ENCODE measurements at regions of chr1 and their contacts with region 1.

Region 1: GRCh38 chr1:156728597-156729462 is at the start of gene ISG20L2:
- DNase-seq: peak; percentile 93 to 94
- H3K4me3 ChIP-seq: peak within 1 kb of the TSS; percentile 90
- H3K27ac ChIP-seq: peak within 1 kb of the TSS; percentile 46
- H3K4me1 ChIP-seq: peaks cover 30% of the 10 kb centered on the region
- H3K27me3 ChIP-seq: no peaks in the 10 kb centered on the region
- CTCF ChIP-seq: no peak
- total RNA-seq, gene ISG20L2: 25.4 and 33.2 TPM in 2 replicates

Region 2: GRCh38 chr1:156625436-156626078 is 103.3 kb before region 1 on chr1:
- CTCF ChIA-PET with region 1: interaction called, 4 read pairs
- POLR2A ChIA-PET with region 1: no interaction called
- intact Hi-C with region 1: loop called (anchors 1 kb)
- DNase-seq: peak in 1 of 2 experiments; percentile 32
- H3K4me3 ChIP-seq: no peak overlapping the region
- H3K27ac ChIP-seq: no peak overlapping the region
- H3K4me1 ChIP-seq: peaks cover 26% of the 10 kb centered on the region
- H3K27me3 ChIP-seq: peaks cover 13% of the 10 kb centered on the region; the same call in 1 of the 2 replicates
- CTCF ChIP-seq: peak; percentile 92

Region 3: DNA sequence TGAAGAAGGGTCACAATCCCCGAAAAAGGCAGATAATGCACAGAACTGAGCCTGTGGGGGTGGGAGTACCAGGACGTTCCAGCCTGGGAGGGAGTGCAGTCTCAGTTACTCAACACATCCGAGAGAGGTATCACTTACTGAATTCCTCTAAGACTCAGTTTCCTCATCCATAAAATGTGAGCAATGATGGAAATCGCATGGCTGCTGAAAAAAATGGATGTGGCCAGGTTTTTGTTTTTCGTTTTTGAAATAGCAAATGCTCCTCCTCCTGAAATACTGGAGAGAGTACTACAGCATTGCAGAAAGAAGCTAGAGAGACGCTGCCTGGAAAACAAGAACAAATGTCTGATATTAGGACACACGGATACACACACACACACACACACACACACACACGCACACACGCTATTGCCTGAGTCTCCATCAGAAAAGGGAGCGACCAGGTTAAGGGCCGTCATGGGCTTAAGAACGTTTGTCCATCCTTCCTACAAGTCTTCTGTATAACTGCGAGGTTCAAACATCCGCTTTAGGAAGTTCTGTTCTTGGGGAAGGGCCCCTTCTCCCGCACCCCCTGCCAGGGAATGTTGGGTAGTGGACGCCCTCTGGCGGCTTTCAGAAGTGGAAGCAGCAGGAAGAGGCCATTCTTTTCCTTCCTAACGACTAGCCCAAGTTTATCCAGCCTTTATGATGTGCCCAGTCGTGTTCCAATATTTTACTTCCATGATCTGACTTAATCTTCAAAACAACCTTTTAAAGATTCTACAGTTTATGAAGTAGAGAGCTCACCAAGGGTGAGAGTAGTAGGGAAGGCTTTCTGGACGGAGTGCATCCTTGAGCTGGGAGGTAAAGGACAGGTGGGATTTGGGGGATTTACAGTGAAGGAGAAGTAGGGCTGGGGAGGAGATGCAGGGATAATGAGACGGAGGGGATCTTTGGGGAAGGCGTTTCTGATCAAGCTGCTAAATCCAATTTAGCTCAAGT is 50.9 kb before region 1 on chr1:
- CTCF ChIA-PET with region 1: interaction called, 8 read pairs
- POLR2A ChIA-PET with region 1: interaction called, 9 read pairs
- intact Hi-C with region 1: loop called (anchors 1 kb)
- DNase-seq: peak in 1 of 2 experiments; percentile 56
- H3K4me3 ChIP-seq: peak overlapping the region; percentile 39; the same call in 1 of the 2 replicates
- H3K27ac ChIP-seq: no peak overlapping the region
- H3K4me1 ChIP-seq: peaks cover 9% of the 10 kb centered on the region
- H3K27me3 ChIP-seq: peaks cover 24% of the 10 kb centered on the region
- CTCF ChIP-seq: peak; percentile 91

Region 4: GRCh38 chr1:156751758-156752757 is 23.2 kb after region 1 on chr1:
- CTCF ChIA-PET with region 1: interaction called, 4 read pairs
- POLR2A ChIA-PET with region 1: interaction called, 8 read pairs
- intact Hi-C with region 1: loop called (anchors 1 kb)
- DNase-seq: peak; percentile 87 to 95
- H3K4me3 ChIP-seq: peak overlapping the region; percentile 95
- H3K27ac ChIP-seq: peak overlapping the region; percentile 59
- H3K4me1 ChIP-seq: peaks cover 21% of the 10 kb centered on the region
- H3K27me3 ChIP-seq: no peaks in the 10 kb centered on the region
- CTCF ChIP-seq: no peak

Region 5: DNA sequence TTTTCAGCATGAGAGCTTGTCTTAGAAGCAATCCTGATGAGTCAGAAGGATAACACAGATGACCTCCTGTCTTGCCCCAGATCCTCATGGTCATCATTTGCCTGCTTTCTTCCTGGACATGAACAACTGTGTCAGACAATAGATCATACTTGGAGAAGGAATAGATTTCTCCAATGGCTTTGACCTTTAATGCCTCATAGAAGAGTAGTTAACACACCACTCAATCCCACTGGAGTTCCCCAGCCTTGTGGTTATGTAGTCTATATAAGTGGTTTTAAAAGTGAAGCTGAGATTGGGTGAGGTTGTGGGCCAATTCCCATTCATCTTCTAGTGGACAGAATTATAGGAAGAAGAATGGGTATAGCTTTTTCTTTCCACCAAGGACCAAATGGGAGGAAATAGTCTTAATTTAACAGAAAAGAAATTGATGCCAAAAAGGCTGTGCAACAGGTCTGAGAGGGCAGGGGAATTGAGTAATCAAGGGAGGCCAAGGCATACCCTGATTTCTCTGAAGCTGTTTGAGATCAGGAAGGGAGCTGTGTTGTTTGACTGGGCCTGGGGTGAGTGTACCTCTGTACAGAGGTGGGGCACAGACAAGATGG is 52.9 kb after region 1 on chr1:
- CTCF ChIA-PET with region 1: no interaction called
- POLR2A ChIA-PET with region 1: no interaction called
- intact Hi-C with region 1: no loop called
- DNase-seq: no peak
- H3K4me3 ChIP-seq: no peak overlapping the region
- H3K27ac ChIP-seq: no peak overlapping the region
- H3K4me1 ChIP-seq: no peaks in the 10 kb centered on the region
- H3K27me3 ChIP-seq: no peaks in the 10 kb centered on the region
- CTCF ChIP-seq: no peak

Region 6: GRCh38 chr1:156797212-156797871 is 68.5 kb after region 1 on chr1:
- CTCF ChIA-PET with region 1: interaction called, 3 read pairs
- POLR2A ChIA-PET with region 1: interaction called, 9 read pairs
- intact Hi-C with region 1: loop called (anchors 1 kb)
- DNase-seq: peak; percentile 41 to 54
- H3K4me3 ChIP-seq: no peak overlapping the region
- H3K27ac ChIP-seq: no peak overlapping the region
- H3K4me1 ChIP-seq: no peaks in the 10 kb centered on the region
- H3K27me3 ChIP-seq: no peaks in the 10 kb centered on the region
- CTCF ChIP-seq: peak; percentile 90

Region 7: GRCh38 chr1:156892190-156893047 is 163.6 kb after region 1 on chr1:
- CTCF ChIA-PET with region 1: interaction called, 11 read pairs
- POLR2A ChIA-PET with region 1: interaction called, 4 read pairs
- intact Hi-C with region 1: loop called (anchors 1 kb)
- DNase-seq: peak; percentile 75 to 91
- H3K4me3 ChIP-seq: peak overlapping the region; percentile 24; the same call in 1 of the 2 replicates
- H3K27ac ChIP-seq: no peak overlapping the region
- H3K4me1 ChIP-seq: peaks cover 23% of the 10 kb centered on the region
- H3K27me3 ChIP-seq: peaks cover 8% of the 10 kb centered on the region
- CTCF ChIP-seq: peak; percentile 87